ENCODE measurements at regions of chr3 and their contacts with region 1.

Region 1: GRCh38 chr3:17831366-17831765 is 88.9 kb upstream of the TBC1D5 start:
- DNase-seq: no peak
- H3K4me3 ChIP-seq: no peak overlapping the region
- H3K27ac ChIP-seq: no peak overlapping the region
- H3K27me3 ChIP-seq: no peaks in the 10 kb centered on the region
- CTCF ChIP-seq: no peak

Region 2: GRCh38 chr3:17655743-17656142 is 175.6 kb before region 1 on chr3:
- intact Hi-C with region 1: loop called in 1 of 2 experiments (anchors 10 kb)
- DNase-seq: no peak
- H3K4me3 ChIP-seq: no peak overlapping the region
- H3K27ac ChIP-seq: no peak overlapping the region
- H3K27me3 ChIP-seq: no peaks in the 10 kb centered on the region
- CTCF ChIP-seq: no peak

Region 3: DNA sequence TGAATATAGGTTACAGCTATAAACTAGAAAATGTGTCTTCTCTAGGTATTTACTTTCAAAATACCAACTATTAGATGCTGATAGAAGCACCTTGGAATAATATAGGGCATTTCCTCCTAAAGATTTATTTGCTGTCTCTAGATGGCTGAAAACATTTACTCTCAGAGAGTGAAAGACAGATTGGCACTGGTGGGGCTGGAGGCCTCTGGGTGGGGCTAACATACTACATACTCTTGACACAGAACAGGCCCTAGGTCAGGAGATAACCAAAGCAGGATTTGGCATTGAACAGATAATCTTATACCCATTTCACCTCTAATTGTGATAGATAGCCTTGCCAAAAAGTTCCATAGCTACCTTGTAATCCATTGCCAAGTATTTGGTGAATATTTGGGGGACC is 164.4 kb after region 1 on chr3:
- intact Hi-C with region 1: no loop called
- DNase-seq: no peak
- H3K4me3 ChIP-seq: no peak overlapping the region
- H3K27ac ChIP-seq: no peak overlapping the region
- H3K27me3 ChIP-seq: no peaks in the 10 kb centered on the region
- CTCF ChIP-seq: no peak

Region 4: GRCh38 chr3:18046131-18046915 is 215.0 kb after region 1 on chr3:
- intact Hi-C with region 1: no loop called
- DNase-seq: no peak
- H3K4me3 ChIP-seq: no peak overlapping the region
- H3K27ac ChIP-seq: no peak overlapping the region
- H3K27me3 ChIP-seq: no peaks in the 10 kb centered on the region
- CTCF ChIP-seq: no peak

Measured in dorsolateral prefrontal cortex (tissue), 120 donors.